WTC11 (cell line): ENCODE measurements at regions of chr5 and their contacts with region 1.

Region 1: GRCh38 chr5:159444441-159445082 is 114.3 kb upstream of the IL12B start:
- DNase-seq: no peak
- ATAC-seq: peak; percentile 35
- H3K4me3 Mint-ChIP-seq: no peak overlapping the region
- H3K27ac Mint-ChIP-seq: no peak overlapping the region
- H3K4me1 Mint-ChIP-seq: peaks cover 17% of the 10 kb centered on the region
- H3K27me3 Mint-ChIP-seq: no peaks in the 10 kb centered on the region
- CTCF ChIP-seq: no peak

Region 2: DNA sequence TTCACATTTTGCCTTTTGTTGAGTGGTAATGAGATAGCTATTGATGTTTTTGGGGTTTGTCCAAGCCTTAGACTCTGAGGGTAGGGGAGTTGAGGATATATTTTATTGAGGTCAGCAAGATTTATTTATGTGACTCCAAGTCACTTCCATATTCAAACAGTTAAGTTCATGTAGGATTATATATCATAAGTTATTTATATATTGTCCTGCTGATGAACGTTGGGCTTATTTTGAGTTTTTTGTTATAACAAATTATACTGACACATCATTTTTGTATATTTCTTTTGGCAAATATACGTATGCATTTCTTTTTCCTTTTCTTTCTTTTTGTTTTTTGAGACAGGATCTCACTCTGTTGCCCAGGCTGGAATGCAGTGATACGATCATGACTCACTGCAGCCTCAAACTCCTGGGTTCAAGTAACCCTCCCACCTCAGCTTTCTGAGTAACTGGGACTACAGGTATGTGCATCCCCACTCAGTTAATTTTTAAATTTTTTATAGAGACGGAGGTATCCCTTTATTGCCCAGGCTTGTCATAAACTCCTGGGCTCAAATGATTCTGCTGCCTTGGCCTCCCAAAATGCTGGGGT is 90.8 kb before region 1 on chr5:
- CTCF ChIA-PET with region 1: no interaction called
- POLR2A ChIA-PET with region 1: no interaction called
- DNase-seq: no peak
- ATAC-seq: no peak
- H3K4me3 Mint-ChIP-seq: no peak overlapping the region
- H3K27ac Mint-ChIP-seq: no peak overlapping the region
- H3K4me1 Mint-ChIP-seq: no peaks in the 10 kb centered on the region
- H3K27me3 Mint-ChIP-seq: no peaks in the 10 kb centered on the region
- CTCF ChIP-seq: no peak

Region 3: DNA sequence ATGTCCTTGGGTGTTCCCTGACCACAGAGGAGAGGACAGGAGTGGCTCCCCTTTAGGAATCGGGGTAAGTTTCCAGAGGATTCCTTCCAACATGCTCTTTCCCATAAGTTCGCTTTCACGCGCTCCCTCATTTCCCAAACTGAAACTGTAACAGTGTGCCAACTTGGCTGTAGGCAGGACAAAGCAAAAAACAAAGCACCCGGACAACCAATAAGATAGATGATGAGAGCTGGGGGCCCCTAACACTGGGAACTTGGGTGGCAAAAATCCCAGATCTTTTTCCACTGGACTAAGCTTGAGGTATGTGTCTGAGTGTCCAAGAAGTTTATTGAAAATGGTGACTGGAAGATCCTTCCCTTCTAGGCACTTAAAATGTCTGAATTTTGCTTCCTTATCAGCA is 144.4 kb after region 1 on chr5:
- CTCF ChIA-PET with region 1: no interaction called
- POLR2A ChIA-PET with region 1: no interaction called
- DNase-seq: no peak
- ATAC-seq: no peak
- H3K4me3 Mint-ChIP-seq: no peak overlapping the region
- H3K27ac Mint-ChIP-seq: no peak overlapping the region
- H3K4me1 Mint-ChIP-seq: peaks cover 12% of the 10 kb centered on the region
- H3K27me3 Mint-ChIP-seq: no peaks in the 10 kb centered on the region
- CTCF ChIP-seq: no peak

Region 4: DNA sequence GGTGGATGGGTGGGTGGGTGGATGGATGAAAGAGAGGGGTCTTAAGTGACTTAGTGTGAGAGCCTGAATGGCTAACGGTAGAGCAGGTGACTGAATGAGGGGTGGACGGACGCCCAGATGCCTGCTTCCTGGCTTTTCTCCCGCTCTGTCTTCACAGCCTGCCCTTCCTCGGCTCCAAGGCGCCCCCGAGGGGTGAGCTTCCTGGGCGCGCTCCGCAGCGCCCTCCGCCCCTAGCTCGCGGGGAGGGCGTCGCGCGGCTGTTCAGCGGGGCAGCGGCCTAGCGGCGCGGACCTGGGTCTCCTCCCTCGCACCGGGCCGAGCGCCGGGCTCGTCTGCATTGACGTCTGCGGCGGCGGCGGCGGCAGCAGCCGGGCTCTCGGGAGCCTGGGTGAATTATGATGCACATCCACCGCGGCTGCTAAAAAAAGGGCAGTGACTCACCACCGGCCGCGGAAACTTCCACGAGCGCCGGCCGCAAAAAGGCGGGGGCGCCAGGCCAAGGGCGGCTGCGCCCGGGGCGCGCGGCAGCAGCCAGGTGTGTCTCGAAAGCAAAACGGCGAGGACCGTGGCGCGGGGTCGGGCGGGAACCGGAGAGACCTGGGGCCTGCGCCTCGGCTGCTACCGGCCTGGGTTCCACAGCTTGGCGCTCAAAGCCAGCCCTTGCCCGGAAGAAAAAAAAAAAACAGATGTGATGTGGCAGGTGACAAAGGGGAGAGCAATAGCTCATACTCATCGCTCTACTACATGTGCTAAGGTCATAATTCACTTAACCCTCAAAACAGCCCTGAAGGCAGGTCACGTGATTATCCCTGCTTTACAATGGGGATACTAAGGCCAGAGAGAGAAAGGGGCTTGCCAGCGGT is 328.7 kb after region 1 on chr5:
- CTCF ChIA-PET with region 1: interaction called, 16 read pairs
- POLR2A ChIA-PET with region 1: no interaction called
- DNase-seq: peak; percentile 60
- ATAC-seq: peak; percentile 57
- H3K4me3 Mint-ChIP-seq: peak overlapping the region; percentile 54
- H3K27ac Mint-ChIP-seq: peak overlapping the region; percentile 36; the same call in 1 of the 2 replicates
- H3K4me1 Mint-ChIP-seq: peaks cover 41% of the 10 kb centered on the region
- H3K27me3 Mint-ChIP-seq: peaks cover 11% of the 10 kb centered on the region
- CTCF ChIP-seq: no peak

Region 5: DNA sequence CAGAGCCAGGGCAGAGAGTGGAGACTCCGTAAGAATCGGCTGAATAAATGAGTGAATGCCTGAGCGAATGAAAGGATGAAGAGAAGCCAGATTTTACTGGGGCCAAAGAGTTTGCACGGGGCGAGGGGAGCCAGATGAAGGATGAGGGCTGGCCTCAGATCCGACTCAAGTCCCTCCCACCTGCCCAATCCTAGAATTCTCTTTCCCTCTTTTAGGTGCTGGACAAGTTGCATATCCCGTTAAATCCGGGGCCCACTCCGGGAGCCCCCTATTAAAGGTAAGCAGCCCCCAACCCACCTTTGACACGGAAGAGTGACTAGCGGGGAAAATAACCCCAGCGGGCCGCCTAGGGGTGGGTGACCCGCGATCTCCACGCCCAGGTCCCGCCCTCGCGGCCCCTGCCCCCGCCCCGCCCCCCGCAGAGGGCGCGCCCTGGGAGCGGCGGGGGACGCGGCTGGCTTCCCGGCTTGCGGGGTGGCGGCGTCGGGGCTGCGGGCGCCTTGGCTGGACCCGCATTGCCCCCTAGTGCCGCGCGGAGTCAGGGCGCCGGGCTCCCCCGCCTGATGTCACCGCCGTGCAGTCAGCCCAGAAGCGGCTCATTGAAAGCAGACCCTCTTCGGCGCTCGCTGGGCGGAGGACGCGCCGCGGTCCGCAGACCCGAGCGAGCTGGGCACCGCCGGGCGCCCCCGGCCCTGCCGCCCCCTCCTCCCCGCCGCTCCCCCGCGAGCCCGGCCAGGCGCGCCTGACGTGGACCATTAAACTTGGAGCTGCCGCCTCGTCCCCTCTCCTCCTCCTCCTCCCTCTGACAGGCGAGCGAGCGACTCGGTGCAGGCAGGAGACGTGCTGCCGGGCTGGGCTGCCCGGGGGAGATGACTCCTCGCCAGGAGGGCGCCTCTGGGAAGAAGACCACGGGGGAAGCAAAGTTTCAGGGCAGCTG is 471.6 kb after region 1 on chr5 and contains the start of gene ADRA1B:
- CTCF ChIA-PET with region 1: interaction called, 14 read pairs
- POLR2A ChIA-PET with region 1: no interaction called
- DNase-seq: peak; percentile 80
- ATAC-seq: peak; percentile 91
- H3K4me3 Mint-ChIP-seq: peak within 1 kb of the TSS; percentile 78
- H3K27ac Mint-ChIP-seq: no peak within 1 kb of the TSS
- H3K4me1 Mint-ChIP-seq: peaks cover 9% of the 10 kb centered on the region
- H3K27me3 Mint-ChIP-seq: peaks cover 47% of the 10 kb centered on the region
- CTCF ChIP-seq: peak; percentile 37; the same call in 1 of the 2 replicates
- total RNA-seq, gene ADRA1B: 0.11 to 0.16 TPM in 2 of 3 replicates, not detected in the other

Region 6: DNA sequence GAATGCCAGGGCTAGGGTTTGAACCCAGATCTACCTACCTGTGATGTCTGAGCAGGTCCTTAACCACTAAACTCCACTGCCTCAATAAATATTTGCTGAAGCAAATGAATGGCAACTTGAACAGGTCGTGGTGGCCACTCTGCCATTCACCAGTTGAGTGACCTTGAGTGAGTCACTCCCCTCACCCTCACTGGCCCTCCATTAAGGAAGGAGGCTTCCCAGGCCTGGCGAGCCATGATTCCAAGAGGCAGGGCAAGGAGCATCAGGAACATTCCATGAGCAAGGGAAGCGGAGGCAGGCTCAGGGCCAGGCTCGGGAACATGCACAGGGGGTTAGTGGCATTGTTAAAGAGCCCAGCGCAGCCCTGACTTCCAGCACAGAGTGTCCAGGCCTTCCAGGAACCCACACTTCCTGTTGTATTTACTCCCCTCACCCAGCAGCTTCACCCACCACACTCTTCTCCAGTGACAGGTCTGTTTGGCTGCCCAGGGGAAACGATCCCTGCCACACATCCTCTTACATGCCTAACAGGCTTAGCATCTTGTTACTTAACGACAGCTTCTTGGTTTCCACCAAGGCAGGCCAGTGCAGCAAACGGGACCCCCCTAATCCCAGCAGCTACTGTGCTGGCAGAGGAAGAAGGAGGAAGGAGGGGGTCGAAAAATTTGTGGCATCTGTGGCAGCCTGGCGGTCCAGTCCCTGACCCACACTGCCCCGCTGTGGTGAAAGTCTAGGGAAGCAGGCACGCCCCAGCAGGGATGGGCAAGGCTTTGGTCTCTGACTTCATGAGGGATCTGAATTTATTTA is 520.7 kb after region 1 on chr5:
- CTCF ChIA-PET with region 1: interaction called, 15 read pairs
- POLR2A ChIA-PET with region 1: no interaction called
- DNase-seq: peak; percentile 82
- ATAC-seq: peak; percentile 98
- H3K4me3 Mint-ChIP-seq: no peak overlapping the region
- H3K27ac Mint-ChIP-seq: no peak overlapping the region
- H3K4me1 Mint-ChIP-seq: no peaks in the 10 kb centered on the region; the same call in 1 of the 2 replicates
- H3K27me3 Mint-ChIP-seq: peaks cover 11% of the 10 kb centered on the region
- CTCF ChIP-seq: peak; percentile 43